CD8-positive, alpha-beta memory T cell (primary cell): ENCODE measurements at regions of chr17 and their contacts with region 1.

Region 1: DNA sequence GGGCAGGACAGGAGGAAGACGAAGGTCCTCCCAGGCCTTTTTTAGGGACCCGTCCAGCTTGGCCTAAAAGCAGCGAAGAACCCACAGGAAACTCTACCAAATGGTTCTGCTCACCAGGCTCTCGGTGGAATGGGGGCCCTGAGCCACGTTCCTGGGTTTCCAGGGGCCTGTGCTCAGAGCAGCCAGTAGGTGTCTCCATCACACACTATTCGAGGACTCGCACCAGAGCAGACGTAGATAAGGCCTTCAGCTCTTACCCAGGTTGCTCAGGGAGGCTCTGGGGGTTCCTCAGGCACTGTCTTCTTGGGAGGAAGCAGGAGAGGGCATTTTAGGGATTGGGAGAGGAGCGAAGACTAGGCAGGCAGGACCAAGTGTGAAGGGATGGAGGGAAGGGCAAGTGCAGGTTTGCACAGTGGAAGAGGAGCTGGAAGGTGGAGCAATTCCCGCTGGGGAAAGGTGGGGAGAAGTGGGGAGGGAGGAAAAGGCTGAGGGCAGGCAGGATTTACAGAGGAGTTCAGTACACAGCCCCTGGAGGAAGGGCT is 157.1 kb downstream of the RGS9 start:
- DNase-seq: peak; percentile 13 to 65 (median 36)
- H3K4me3 ChIP-seq: no peak overlapping the region
- H3K4me3 Mint-ChIP-seq: no peak overlapping the region
- H3K27ac ChIP-seq: no peak overlapping the region
- H3K27ac Mint-ChIP-seq: no peak overlapping the region
- H3K4me1 ChIP-seq: no peaks in the 10 kb centered on the region
- H3K4me1 Mint-ChIP-seq: peaks cover 0 to 6% (median 1%) of the 10 kb centered on the region in 3 donors
- H3K27me3 ChIP-seq: no peaks in the 10 kb centered on the region
- H3K27me3 Mint-ChIP-seq: peaks cover 4 to 6% of the 10 kb centered on the region in 2 donors

Region 2: DNA sequence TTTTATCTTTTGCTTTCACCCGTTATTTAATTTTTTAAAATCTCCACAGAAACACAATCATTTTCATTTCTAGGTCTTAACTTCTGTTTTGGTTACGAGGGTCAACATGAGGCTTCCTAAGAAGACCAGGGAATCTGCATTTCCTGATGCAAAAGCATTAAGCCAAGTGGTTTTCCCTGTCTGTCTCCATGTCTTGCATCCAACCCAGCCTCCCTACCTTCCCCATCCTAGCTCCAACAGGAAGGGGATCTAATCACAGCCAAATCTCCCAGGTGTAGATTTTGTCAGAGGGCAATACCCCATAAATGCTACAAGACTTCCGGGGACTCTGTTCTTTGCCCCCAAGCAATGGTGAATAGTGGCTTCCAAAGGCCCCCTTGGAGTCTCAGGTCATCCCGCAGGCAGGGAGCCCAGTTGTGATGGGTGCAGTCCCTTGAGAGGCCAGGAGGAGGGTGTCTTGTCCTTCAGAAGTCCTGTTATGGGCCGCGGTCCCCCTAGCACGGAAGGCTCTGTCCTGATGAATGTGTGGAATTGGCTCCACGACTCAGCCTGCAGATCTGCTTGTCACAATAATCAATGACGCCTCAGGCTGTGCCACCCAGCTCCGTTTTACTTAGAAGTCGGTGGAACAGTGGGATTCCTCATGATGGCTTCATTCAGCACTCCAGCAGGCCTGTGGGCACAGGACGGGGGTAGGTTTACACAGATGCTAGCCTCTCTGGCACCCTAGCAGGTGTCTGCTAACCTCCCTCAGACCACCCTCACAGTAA is 16.0 kb before region 1 on chr17:
- CTCF ChIA-PET with region 1: no interaction called
- POLR2A ChIA-PET with region 1: no interaction called
- DNase-seq: peak in 2 of 5 donors; percentile 4 to 45
- H3K4me3 ChIP-seq: no peak overlapping the region
- H3K4me3 Mint-ChIP-seq: no peak overlapping the region
- H3K27ac ChIP-seq: no peak overlapping the region
- H3K27ac Mint-ChIP-seq: no peak overlapping the region
- H3K4me1 ChIP-seq: no peaks in the 10 kb centered on the region
- H3K4me1 Mint-ChIP-seq: peaks cover 7 to 11% (median 9%) of the 10 kb centered on the region in 3 donors
- H3K27me3 ChIP-seq: peaks cover 8% of the 10 kb centered on the region
- H3K27me3 Mint-ChIP-seq: peaks cover 9 to 23% of the 10 kb centered on the region in 2 donors

Region 3: GRCh38 chr17:65385726-65386125 is 91.5 kb after region 1 on chr17:
- CTCF ChIA-PET with region 1: no interaction called
- POLR2A ChIA-PET with region 1: no interaction called
- DNase-seq: no peak
- H3K4me3 ChIP-seq: no peak overlapping the region
- H3K4me3 Mint-ChIP-seq: no peak overlapping the region
- H3K27ac ChIP-seq: no peak overlapping the region
- H3K27ac Mint-ChIP-seq: no peak overlapping the region
- H3K4me1 ChIP-seq: no peaks in the 10 kb centered on the region
- H3K4me1 Mint-ChIP-seq: no peaks in the 10 kb centered on the region
- H3K27me3 ChIP-seq: no peaks in the 10 kb centered on the region
- H3K27me3 Mint-ChIP-seq: peaks cover 5 to 16% of the 10 kb centered on the region in 2 donors

Region 4: GRCh38 chr17:65794572-65794971 is 500.3 kb after region 1 on chr17:
- CTCF ChIA-PET with region 1: interaction called, 10 read pairs
- POLR2A ChIA-PET with region 1: no interaction called
- DNase-seq: peak in 1 of 5 donors; percentile 12
- H3K4me3 ChIP-seq: no peak overlapping the region
- H3K4me3 Mint-ChIP-seq: no peak overlapping the region
- H3K27ac ChIP-seq: no peak overlapping the region
- H3K27ac Mint-ChIP-seq: no peak overlapping the region
- H3K4me1 ChIP-seq: no peaks in the 10 kb centered on the region
- H3K4me1 Mint-ChIP-seq: no peaks in the 10 kb centered on the region
- H3K27me3 ChIP-seq: no peaks in the 10 kb centered on the region
- H3K27me3 Mint-ChIP-seq: peaks cover 4 to 5% of the 10 kb centered on the region in 2 donors

Region 5: DNA sequence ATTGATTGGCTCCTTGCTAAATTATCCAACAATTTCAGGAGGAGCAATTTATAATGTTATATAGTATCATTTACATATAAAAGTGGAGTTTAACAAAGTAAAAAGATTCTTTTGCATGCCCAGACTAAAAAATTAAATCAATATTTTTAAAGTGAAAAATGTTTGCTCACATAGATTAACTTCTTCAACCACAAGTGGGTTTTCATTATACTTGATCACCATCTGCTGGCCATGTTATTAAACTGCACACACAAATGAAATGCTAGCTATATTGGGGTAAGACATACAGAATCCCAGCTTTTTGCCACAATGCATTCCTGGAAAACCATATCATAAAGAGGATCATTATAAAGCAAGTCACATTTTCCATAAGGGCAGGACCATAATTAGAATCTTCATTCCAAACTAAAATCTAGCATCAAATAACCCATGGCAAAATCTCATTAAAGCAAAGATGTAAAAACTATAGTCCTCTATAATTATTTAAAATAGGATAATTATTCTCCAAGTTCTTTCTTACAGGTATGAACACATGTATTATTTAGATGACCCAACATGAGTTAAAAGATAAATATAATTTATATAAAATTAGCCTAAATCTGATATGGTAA is 871.4 kb after region 1 on chr17:
- CTCF ChIA-PET with region 1: interaction called, 34 read pairs
- POLR2A ChIA-PET with region 1: no interaction called
- DNase-seq: peak in 2 of 5 donors; percentile 27 to 44
- H3K4me3 ChIP-seq: no peak overlapping the region
- H3K4me3 Mint-ChIP-seq: no peak overlapping the region
- H3K27ac ChIP-seq: no peak overlapping the region
- H3K27ac Mint-ChIP-seq: no peak overlapping the region
- H3K4me1 ChIP-seq: no peaks in the 10 kb centered on the region
- H3K4me1 Mint-ChIP-seq: peaks cover 4 to 21% (median 16%) of the 10 kb centered on the region in 3 donors
- H3K27me3 ChIP-seq: no peaks in the 10 kb centered on the region
- H3K27me3 Mint-ChIP-seq: peaks cover 0 to under 1% of the 10 kb centered on the region in 2 donors